Activated CD4-positive, alpha-beta T cell treated with anti-CD3 and anti-CD28 coated beads for 36 hours (primary cell): ENCODE measurements at regions of chr5 and their contacts with region 1.

Region 1: GRCh38 chr5:140174465-140175366 is at the start of gene CYSTM1:
- DNase-seq: peak; percentile 98
- ATAC-seq: peak; percentile 93
- H3K4me3 Mint-ChIP-seq: peak within 1 kb of the TSS; percentile 91
- H3K27ac Mint-ChIP-seq: peak within 1 kb of the TSS; percentile 82
- H3K4me1 Mint-ChIP-seq: peaks cover 15% of the 10 kb centered on the region
- H3K27me3 Mint-ChIP-seq: no peaks in the 10 kb centered on the region
- total RNA-seq, gene CYSTM1: 15.2 to 18.7 TPM

Region 2: DNA sequence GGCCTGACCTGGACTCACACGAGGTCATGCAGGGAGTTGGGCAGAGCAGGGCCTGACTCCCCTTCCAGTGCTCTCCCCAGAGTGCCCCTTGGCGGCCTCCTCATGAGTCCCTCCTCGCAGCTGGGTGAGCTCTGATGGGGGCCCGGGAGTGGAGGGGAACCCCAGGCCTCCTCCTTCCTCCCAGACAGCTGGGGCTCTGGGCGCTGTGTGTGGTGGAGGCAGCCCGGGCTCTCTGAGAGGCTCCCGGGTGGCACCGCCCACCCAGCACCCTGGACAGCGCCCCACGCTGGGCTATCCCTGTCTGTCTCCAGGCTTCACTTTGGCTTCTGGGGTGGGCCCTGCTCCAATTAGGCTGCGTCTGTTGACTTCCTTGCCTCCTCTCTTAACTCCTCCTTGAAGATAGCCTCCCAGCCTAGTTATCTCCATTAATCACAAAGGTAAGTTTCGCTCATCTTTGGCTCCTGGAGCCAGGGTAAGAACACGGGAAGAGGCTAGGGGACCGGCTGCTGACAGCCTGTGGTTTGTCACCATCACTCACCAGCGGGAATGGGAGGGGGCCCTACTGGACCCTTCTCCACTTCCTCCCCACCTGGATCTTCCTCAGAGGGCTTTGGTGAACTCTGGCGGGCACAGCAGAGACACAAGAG is 366.1 kb before region 1 on chr5:
- CTCF ChIA-PET with region 1: no interaction called
- POLR2A ChIA-PET with region 1: no interaction called
- intact Hi-C with region 1: no loop called
- DNase-seq: peak; percentile 71
- ATAC-seq: peak; percentile 73
- H3K4me3 Mint-ChIP-seq: no peak overlapping the region
- H3K27ac Mint-ChIP-seq: no peak overlapping the region
- H3K4me1 Mint-ChIP-seq: no peaks in the 10 kb centered on the region
- H3K27me3 Mint-ChIP-seq: peaks cover 6% of the 10 kb centered on the region

Region 3: GRCh38 chr5:139844472-139845145 is 330.1 kb before region 1 on chr5:
- CTCF ChIA-PET with region 1: no interaction called
- POLR2A ChIA-PET with region 1: no interaction called
- intact Hi-C with region 1: no loop called
- DNase-seq: peak; percentile 88
- ATAC-seq: peak; percentile 47
- H3K4me3 Mint-ChIP-seq: no peak overlapping the region
- H3K27ac Mint-ChIP-seq: no peak overlapping the region
- H3K4me1 Mint-ChIP-seq: peaks cover 7% of the 10 kb centered on the region
- H3K27me3 Mint-ChIP-seq: peaks cover 24% of the 10 kb centered on the region

Region 4: GRCh38 chr5:140113699-140114263 is 60.9 kb before region 1 on chr5 and contains the start of gene PURA:
- CTCF ChIA-PET with region 1: no interaction called
- POLR2A ChIA-PET with region 1: no interaction called
- intact Hi-C with region 1: loop called (anchors 1 to 2 kb)
- DNase-seq: peak; percentile 98
- ATAC-seq: peak; percentile 92
- H3K4me3 Mint-ChIP-seq: peak within 1 kb of the TSS; percentile 89
- H3K27ac Mint-ChIP-seq: peak within 1 kb of the TSS; percentile 84
- H3K4me1 Mint-ChIP-seq: peaks cover 65% of the 10 kb centered on the region
- H3K27me3 Mint-ChIP-seq: peaks cover 3% of the 10 kb centered on the region
- total RNA-seq, gene PURA: 9.5 to 10.7 TPM

Region 5: GRCh38 chr5:140157032-140157803 is 17.5 kb before region 1 on chr5:
- CTCF ChIA-PET with region 1: interaction called, 4 read pairs
- POLR2A ChIA-PET with region 1: no interaction called
- intact Hi-C with region 1: loop called in 1 of 2 experiments (anchors 1 kb)
- DNase-seq: peak; percentile 94
- ATAC-seq: peak; percentile 99
- H3K4me3 Mint-ChIP-seq: peak overlapping the region; percentile 22
- H3K27ac Mint-ChIP-seq: peak overlapping the region; percentile 49
- H3K4me1 Mint-ChIP-seq: peaks cover 5% of the 10 kb centered on the region
- H3K27me3 Mint-ChIP-seq: no peaks in the 10 kb centered on the region

Region 6: GRCh38 chr5:140346348-140347101 is 171.8 kb after region 1 on chr5 and contains the start of gene HBEGF:
- CTCF ChIA-PET with region 1: interaction called, 9 read pairs
- POLR2A ChIA-PET with region 1: no interaction called
- intact Hi-C with region 1: loop called in 1 of 2 experiments (anchors 2 kb)
- DNase-seq: peak; percentile 74
- ATAC-seq: peak; percentile 46
- H3K4me3 Mint-ChIP-seq: peak within 1 kb of the TSS; percentile 80
- H3K27ac Mint-ChIP-seq: no peak within 1 kb of the TSS
- H3K4me1 Mint-ChIP-seq: peaks cover 44% of the 10 kb centered on the region
- H3K27me3 Mint-ChIP-seq: peaks cover 2% of the 10 kb centered on the region
- total RNA-seq, gene HBEGF: 11.8 to 12.5 TPM

Region 7: GRCh38 chr5:140632150-140633020 is 457.7 kb after region 1 on chr5:
- CTCF ChIA-PET with region 1: no interaction called
- POLR2A ChIA-PET with region 1: no interaction called
- intact Hi-C with region 1: loop called in 1 of 2 experiments (anchors 1 kb)
- DNase-seq: peak; percentile 69
- ATAC-seq: peak; percentile 67
- H3K4me3 Mint-ChIP-seq: peak overlapping the region; percentile 74
- H3K27ac Mint-ChIP-seq: peak overlapping the region; percentile 73
- H3K4me1 Mint-ChIP-seq: peaks cover 31% of the 10 kb centered on the region
- H3K27me3 Mint-ChIP-seq: peaks cover 14% of the 10 kb centered on the region